Posterior vena cava (tissue), 2 donors: ENCODE measurements at regions of chr16 and their contacts with region 1.

Region 1: GRCh38 chr16:31186176-31186575 is 6.2 kb downstream of the FUS start:
- DNase-seq: no peak

Region 2: DNA sequence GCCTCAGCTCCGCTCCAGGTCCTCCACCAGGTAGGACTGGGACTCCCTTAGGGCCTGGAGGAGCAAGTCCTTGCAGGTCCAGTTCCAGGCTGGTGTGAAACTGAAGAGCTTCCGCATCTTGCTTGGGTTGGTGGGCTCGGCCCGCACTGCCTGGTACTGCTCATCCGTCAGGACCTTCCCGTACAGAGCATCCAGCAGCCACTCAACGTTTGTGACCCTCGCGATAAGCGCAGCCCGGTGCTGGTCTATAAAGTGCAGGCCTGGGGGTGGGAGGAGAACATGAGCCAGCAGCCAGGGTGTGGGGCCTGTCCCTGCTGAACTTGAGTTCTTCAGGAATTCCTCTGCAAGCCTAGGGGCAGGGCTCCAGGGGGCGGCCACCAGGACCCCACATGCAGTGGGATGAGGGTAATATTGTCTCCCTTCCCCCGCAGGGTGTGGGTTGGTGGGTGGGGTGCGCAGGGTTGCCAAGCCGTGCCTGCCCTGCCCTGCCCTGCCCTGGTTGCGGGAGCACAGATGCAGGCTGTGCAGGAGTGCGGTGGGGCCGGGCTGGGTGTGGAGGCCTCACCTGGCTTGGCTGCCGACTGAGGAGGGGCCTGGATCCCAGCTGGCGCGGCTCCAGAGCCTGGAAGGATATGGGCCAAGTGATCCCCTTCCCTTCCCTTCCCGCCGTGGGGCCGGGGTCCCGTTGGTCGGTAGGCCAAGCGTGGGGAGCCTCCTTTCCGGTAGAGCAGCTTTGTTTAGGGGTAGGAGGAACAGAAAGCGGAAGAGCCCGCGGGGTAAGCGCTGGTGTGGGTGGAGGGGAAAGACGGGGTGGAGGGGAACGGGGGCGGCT is 15.6 kb after region 1 on chr16:
- intact Hi-C with region 1: loop called in 1 of 2 experiments (anchors 1 kb)
- DNase-seq: peak; percentile 86